ENCODE measurements at regions of chr18 and their contacts with region 1.

Region 1: DNA sequence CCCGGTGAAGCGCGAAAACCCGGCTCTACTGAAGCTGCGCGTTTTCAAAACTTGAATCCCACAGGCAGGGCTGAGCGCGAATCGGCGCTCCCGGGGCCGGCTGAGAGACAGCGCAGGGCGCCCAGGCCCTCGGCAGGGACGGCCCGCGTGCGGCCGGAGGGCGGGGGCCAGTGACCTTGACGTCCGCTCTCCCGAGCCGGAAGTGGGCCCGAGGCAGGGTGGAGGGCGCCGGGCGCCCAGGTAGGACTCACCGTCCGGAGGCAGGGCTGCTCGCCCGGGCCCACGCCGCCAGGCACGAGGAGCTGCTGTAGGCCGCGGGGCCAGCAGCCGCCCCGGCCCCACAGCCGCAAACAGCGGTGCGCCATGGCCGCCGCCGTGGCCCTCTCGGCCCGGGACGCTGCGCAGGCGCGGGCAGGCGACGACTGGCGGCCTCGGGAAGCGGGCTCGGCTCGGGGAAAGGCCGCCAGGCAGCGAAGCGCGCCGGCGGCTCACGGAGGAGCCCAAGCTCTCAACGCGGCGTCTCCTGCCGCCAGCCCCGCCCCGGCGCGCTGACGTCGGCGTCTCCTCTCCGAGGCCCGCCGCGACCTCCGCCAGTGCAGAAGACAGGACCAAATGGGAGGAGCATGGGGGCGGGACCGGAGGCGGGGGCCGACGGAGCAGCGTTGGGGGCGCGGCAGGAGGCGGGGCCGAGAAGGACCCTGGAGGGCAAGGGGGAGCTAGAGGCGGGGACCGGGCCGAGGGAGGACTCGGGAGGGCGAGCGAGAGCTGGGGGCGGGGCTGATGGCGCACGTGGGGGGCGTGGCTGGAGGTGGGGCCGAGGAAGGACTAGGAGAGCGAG is at the start of gene AFG3L2:
- DNase-seq: peak; percentile 97 to 99 (median 98)
- ATAC-seq: peak; percentile 89
- H3K4me3 ChIP-seq: peak within 1 kb of the TSS; percentile 81
- H3K27ac ChIP-seq: peak within 1 kb of the TSS; percentile 100
- H3K4me1 ChIP-seq: peaks cover 28 to 33% of the 10 kb centered on the region in 2 experiments
- H3K27me3 ChIP-seq: no peaks in the 10 kb centered on the region
- CTCF ChIP-seq: no peak; a peak in 1 of 6 replicates
- EP300 ChIP-seq: no peak
- POLR2A ChIP-seq: peak; percentile 62
- RAD21 ChIP-seq: no peak
- polyA plus RNA-seq, gene AFG3L2: 24.1 to 25.6 TPM

Region 2: DNA sequence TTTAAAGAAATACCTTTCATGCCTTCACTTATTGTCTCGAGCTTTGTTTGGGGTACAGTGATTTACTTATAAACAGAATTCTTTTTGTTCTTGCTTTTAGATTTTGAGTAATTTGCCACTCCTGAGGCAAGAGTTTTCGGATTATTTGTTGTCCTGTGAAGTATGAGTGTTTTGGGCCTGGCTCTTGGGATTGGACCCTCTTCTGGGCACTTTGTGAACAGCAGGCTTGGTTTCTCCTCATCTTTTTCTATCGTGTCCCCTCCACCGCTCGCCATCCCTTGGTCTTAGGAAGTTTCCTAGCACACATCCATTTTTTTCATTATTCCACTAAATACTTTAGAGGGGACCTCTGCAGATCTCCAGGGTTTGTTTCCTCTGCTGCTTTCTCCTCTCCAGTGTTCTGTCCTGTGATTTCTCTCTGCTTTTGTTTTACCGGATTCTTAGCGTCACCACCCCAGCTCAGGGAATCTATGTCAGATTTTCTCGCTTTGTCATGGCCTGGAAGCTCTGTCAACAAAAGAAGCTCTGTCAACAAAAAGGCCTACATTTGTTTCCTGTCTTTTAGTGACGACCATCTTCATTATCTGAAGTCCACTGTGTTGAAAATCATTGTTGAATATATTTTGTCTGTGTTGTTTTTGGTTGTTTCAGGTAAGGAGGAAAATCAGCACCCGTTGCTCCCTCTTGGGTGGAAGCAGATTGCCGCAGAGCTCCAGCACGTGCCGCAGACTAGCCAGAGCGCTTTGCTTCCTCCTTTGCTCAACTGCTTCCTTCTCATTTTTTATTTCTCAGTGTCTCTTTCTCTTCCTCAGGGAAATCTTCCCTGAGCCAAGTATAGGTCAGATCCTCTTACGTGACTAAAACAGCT is 255.5 kb before region 1 on chr18:
- CTCF ChIA-PET with region 1: no interaction called
- POLR2A ChIA-PET with region 1: no interaction called
- in situ Hi-C with region 1: no loop called
- intact Hi-C with region 1: no loop called
- DNase-seq: peak; percentile 12 to 67 (median 20)
- ATAC-seq: peak; percentile 99
- H3K4me3 ChIP-seq: no peak overlapping the region
- H3K27ac ChIP-seq: no peak overlapping the region
- H3K4me1 ChIP-seq: no peaks in the 10 kb centered on the region
- H3K27me3 ChIP-seq: peaks cover 0 to 5% of the 10 kb centered on the region in 2 experiments; a peak in 2 of 5 replicates
- CTCF ChIP-seq: peak; percentile 40 to 42 (median 41); a peak in 4 of 6 replicates
- EP300 ChIP-seq: no peak
- POLR2A ChIP-seq: no peak
- RAD21 ChIP-seq: no peak

Region 3: DNA sequence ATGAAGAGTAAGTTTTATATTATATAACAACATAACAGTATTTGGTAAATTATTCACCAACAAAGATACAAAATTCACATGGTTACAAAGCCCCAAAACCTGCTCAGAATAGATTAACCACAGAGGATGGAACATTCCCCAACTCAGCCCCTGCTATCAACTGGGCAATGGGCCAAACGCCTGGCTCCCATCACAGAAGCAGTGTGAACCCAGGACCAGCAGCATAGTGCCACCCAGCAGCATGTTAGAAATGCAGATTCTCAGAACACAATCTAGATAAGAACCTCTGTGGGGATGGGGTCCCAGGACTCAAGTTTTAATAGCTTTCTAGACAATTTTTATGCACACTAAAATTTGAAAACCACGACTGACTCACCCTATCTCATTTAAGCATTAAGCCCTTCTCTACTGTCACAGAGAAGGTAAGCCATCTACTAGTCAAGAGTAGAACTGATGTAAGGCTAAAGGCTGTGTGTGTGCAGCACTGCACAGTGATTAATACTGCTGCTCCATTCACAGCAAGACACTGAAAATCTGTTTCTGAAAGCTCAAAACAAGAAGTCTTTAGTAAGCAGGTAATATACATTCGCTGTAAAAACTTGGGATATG is 15.1 kb before region 1 on chr18:
- CTCF ChIA-PET with region 1: no interaction called
- POLR2A ChIA-PET with region 1: interaction called, 23 read pairs
- in situ Hi-C with region 1: no loop called
- intact Hi-C with region 1: no loop called
- DNase-seq: peak in 2 of 4 experiments; percentile 40 to 59
- ATAC-seq: peak; percentile 46
- H3K4me3 ChIP-seq: no peak overlapping the region
- H3K27ac ChIP-seq: no peak overlapping the region
- H3K4me1 ChIP-seq: peaks cover 3 to 23% of the 10 kb centered on the region in 2 experiments; a peak in 3 of 5 replicates
- H3K27me3 ChIP-seq: no peaks in the 10 kb centered on the region
- CTCF ChIP-seq: no peak
- EP300 ChIP-seq: no peak
- POLR2A ChIP-seq: no peak
- RAD21 ChIP-seq: no peak